ENCODE measurements at regions of chr1 and their contacts with region 1.

Region 1: GRCh38 chr1:185546029-185546428 is 188.2 kb upstream of the HMCN1 start:
- DNase-seq: no peak
- ATAC-seq: no peak
- H3K4me3 ChIP-seq: no peak overlapping the region
- H3K27ac ChIP-seq: no peak overlapping the region
- H3K4me1 ChIP-seq: no peaks in the 10 kb centered on the region
- H3K27me3 ChIP-seq: no peaks in the 10 kb centered on the region
- CTCF ChIP-seq: no peak
- EP300 ChIP-seq: no peak
- POLR2A ChIP-seq: no peak
- RAD21 ChIP-seq: no peak

Region 2: GRCh38 chr1:185257947-185258203 is 288.2 kb before region 1 on chr1:
- CTCF ChIA-PET with region 1: no interaction called
- POLR2A ChIA-PET with region 1: no interaction called
- RAD21 ChIA-PET with region 1: no interaction called
- SMC1A ChIA-PET with region 1: no interaction called
- in situ Hi-C with region 1: no loop called
- intact Hi-C with region 1: no loop called
- DNase-seq: no peak
- ATAC-seq: no peak
- H3K4me3 ChIP-seq: no peak overlapping the region
- H3K27ac ChIP-seq: no peak overlapping the region
- H3K4me1 ChIP-seq: no peaks in the 10 kb centered on the region
- H3K27me3 ChIP-seq: no peaks in the 10 kb centered on the region
- CTCF ChIP-seq: no peak
- EP300 ChIP-seq: no peak
- POLR2A ChIP-seq: no peak
- RAD21 ChIP-seq: no peak

Region 3: DNA sequence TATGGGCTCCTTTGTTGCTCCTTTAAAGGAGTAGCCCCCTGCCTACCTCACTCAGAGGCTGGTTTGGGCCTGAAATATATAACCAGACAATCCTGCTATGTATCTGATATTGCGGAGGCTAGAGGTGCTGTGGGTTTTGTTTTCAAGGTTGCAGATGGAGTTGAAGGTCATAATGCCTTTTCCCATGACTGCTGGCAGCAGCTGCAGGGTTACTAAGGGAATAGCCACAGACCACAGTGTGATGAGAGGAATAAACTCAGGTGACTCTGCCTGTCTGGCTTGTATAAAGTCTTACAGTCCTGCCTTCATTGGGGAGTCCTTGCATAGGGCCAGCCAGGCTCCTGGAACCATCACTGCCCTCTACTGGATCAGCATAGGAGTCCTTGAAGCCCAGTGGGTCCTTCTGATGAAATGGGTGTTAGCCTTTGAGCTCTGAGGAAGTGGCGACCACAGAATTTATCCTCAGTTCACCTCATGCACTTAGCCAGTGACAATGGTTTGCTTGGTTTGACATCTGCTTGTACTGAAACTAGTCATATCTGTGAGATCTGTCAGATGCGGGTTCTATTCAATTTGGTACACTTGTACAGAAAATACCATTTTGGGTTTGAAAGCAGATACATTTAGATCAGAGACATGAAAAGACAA is 13.8 kb after region 1 on chr1:
- CTCF ChIA-PET with region 1: interaction called, 10 read pairs
- POLR2A ChIA-PET with region 1: interaction called, 3 read pairs
- RAD21 ChIA-PET with region 1: no interaction called
- SMC1A ChIA-PET with region 1: interaction called, 6 read pairs
- in situ Hi-C with region 1: no loop called
- intact Hi-C with region 1: no loop called
- DNase-seq: peak; percentile 72
- ATAC-seq: peak; percentile 96
- H3K4me3 ChIP-seq: no peak overlapping the region
- H3K27ac ChIP-seq: no peak overlapping the region
- H3K4me1 ChIP-seq: peaks cover 7% of the 10 kb centered on the region
- H3K27me3 ChIP-seq: no peaks in the 10 kb centered on the region
- CTCF ChIP-seq: peak; percentile 34 to 51 (median 46)
- EP300 ChIP-seq: peak in 1 of 2 experiments; percentile 66; a peak in 2 of 4 replicates
- POLR2A ChIP-seq: no peak
- RAD21 ChIP-seq: peak; percentile 59

Region 4: DNA sequence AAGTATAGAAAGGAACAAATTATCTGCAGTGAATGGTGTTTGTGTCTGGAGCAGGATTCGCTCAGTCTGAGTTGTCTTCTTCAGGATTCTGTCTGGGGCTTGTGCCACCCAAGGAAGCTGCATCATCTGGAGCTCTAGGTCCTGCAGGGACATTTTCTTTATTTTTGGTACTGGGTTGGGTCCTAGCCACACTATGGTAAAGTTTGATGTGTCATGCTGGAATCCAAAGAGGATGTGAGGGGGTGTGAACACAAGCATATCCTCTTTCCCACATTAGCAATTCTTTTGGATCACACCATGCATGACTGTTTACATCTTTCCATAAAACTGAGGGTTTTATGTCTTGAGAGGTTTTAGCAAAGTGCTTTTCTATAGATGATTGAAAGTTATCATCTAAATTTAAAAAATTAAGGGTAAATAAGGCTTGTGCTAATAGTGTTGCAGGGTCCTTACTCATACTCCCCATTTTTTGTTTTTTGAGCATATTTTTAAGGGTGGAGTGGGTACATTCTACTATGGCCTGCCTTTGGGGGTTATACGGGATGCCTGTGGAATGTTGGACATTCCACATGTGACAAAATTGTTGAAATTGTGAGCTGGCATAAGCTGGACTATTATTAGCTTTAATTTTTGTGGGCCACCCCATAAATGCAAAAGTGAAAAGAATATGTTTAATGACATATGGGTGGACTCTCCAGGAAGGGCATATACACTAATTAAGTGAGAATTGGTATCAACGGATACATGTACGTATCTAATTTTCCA is 36.1 kb after region 1 on chr1:
- CTCF ChIA-PET with region 1: no interaction called
- POLR2A ChIA-PET with region 1: no interaction called
- RAD21 ChIA-PET with region 1: no interaction called
- SMC1A ChIA-PET with region 1: no interaction called
- in situ Hi-C with region 1: no loop called
- intact Hi-C with region 1: no loop called
- DNase-seq: no peak
- ATAC-seq: no peak
- H3K4me3 ChIP-seq: no peak overlapping the region
- H3K27ac ChIP-seq: no peak overlapping the region
- H3K4me1 ChIP-seq: no peaks in the 10 kb centered on the region
- H3K27me3 ChIP-seq: no peaks in the 10 kb centered on the region
- CTCF ChIP-seq: no peak
- EP300 ChIP-seq: no peak
- POLR2A ChIP-seq: no peak
- RAD21 ChIP-seq: no peak

Measured in GM12878 (cell line).